Natural killer cell (primary cell): ENCODE measurements at regions of chr12 and their contacts with region 1.

Region 1: DNA sequence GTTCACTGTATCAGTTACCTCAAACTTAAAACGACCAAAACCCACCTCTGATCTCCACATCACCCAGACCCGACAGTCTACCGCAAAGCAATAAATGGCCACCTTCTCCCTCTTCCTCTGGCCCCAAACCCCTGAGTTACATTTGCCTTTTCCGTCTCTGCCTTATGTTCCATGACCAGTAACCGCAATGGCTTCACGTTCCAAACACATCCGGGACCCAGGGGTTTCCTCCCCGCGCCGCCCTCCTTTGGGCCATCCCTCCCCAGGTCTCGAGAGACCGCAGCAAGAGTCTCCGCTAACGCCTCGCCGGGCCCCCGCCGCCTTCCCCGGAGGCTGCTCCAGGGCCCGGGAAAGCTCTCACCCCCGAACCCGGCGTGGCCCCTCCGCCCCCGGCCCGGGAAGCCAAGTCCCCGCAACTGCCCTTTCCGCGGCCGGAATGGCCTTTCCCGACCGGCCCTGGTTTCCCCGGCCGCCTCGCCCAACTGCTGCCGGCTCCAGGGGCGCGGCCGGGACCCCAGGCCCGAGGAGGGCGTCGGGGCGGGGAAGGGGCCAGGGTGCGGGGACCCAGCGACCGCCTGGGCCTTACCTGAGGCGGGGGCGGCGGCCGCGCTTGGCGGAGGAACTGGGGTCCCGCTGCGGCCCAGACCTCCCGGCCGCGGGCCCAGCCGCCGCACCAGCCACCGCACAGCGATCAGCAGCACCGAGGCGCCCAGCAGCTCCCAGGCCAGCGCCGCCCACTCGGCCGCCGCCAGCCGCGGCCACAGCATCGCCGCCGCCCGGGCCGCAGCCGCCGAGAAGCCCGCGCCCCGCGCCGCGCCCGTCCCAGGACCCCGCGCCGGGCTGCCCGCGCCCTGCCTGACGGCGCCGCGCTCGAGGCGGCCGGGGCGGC is at the start of gene ANKLE2:
- DNase-seq: peak; percentile 47 to 73
- ATAC-seq: peak; percentile 65 to 77 (median 68)
- H3K4me3 ChIP-seq: peak within 1 kb of the TSS; percentile 94
- H3K4me3 Mint-ChIP-seq: peak within 1 kb of the TSS; percentile 93
- H3K27ac ChIP-seq: peak within 1 kb of the TSS; percentile 94
- H3K27ac Mint-ChIP-seq: peak within 1 kb of the TSS; percentile 91 to 95
- H3K4me1 ChIP-seq: peaks cover 32% of the 10 kb centered on the region
- H3K4me1 Mint-ChIP-seq: peaks cover 23 to 27% of the 10 kb centered on the region in 2 donors
- H3K27me3 ChIP-seq: no peaks in the 10 kb centered on the region
- H3K27me3 Mint-ChIP-seq: no peaks in the 10 kb centered on the region
- CTCF ChIP-seq: no peak
- total RNA-seq, gene ANKLE2: 67.3 to 86.4 (median 84.6) TPM

Region 2: DNA sequence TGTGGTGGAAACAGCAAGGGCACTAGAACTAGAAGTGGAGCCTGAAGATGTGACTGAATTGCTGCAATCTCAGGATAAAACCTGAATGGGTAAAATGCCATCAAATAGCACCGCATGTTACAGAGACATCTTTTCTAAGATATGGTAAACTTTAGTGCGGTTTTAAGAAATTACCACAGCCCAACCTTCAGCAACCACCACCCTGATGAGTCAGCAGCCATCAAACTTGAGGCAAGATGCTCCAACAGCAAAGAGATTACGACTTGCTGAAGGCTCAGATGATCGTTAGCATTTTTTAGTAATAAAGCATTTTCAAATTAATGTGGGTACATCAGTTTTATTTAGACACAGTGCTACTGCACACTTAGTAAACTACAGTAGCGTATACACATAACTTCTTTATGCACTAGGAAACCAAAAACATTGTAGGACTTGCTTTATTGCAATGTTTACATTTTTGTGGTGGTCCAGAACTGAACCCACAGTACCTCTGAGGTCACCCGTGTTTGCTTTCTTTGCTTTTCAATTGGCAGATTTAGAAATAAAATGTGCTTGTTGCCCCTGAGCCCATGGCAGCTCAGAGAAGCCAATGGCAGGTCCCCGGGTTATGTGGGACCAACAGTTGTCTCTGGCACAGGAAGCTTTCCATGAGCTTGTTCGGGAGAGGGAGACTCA is 51.5 kb after region 1 on chr12:
- intact Hi-C with region 1: loop called (anchors 10 kb)
- DNase-seq: peak in 1 of 2 donors; percentile 50
- ATAC-seq: peak; percentile 37 to 46 (median 46)
- H3K4me3 ChIP-seq: no peak overlapping the region
- H3K4me3 Mint-ChIP-seq: no peak overlapping the region
- H3K27ac ChIP-seq: no peak overlapping the region
- H3K27ac Mint-ChIP-seq: no peak overlapping the region
- H3K4me1 ChIP-seq: peaks cover 6% of the 10 kb centered on the region
- H3K4me1 Mint-ChIP-seq: peaks cover 11 to 12% of the 10 kb centered on the region in 2 donors
- H3K27me3 ChIP-seq: no peaks in the 10 kb centered on the region
- H3K27me3 Mint-ChIP-seq: no peaks in the 10 kb centered on the region
- CTCF ChIP-seq: no peak

Region 3: DNA sequence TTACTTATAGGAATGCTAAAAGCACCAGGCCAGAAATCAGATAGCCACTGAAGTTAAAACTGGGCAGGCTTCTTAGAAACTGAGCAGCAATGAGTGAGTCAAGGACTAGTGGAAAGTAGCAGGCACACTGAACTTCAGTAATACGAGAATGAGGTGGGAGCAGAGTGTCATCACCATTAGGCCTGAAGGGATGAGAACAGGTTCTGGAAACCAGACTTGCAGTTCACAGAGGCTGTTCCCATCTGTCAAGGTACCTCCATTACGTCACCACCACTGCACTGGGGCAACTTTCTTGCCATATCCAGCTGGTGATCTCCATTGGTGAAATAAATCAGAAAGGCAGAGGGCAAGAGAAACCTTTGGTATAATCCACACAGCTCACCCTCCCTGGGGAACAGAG is 384.7 kb after region 1 on chr12:
- intact Hi-C with region 1: no loop called
- DNase-seq: no peak
- ATAC-seq: no peak
- H3K4me3 ChIP-seq: no peak overlapping the region
- H3K4me3 Mint-ChIP-seq: no peak overlapping the region
- H3K27ac ChIP-seq: no peak overlapping the region
- H3K27ac Mint-ChIP-seq: no peak overlapping the region
- H3K4me1 ChIP-seq: no peaks in the 10 kb centered on the region
- H3K4me1 Mint-ChIP-seq: no peaks in the 10 kb centered on the region
- H3K27me3 ChIP-seq: no peaks in the 10 kb centered on the region
- H3K27me3 Mint-ChIP-seq: no peaks in the 10 kb centered on the region
- CTCF ChIP-seq: no peak